MCF 10A (cell line): ENCODE measurements at regions of chr5 and their contacts with region 1.

Region 1: GRCh38 chr5:16916262-16916865 is 19.7 kb downstream of the MYO10 start:
- DNase-seq: peak; percentile 93
- H3K4me3 Mint-ChIP-seq: peak overlapping the region; percentile 54
- H3K27ac Mint-ChIP-seq: peak overlapping the region; percentile 81
- H3K4me1 Mint-ChIP-seq: peaks cover 43% of the 10 kb centered on the region
- H3K27me3 Mint-ChIP-seq: no peaks in the 10 kb centered on the region
- CTCF ChIP-seq: no peak

Region 2: DNA sequence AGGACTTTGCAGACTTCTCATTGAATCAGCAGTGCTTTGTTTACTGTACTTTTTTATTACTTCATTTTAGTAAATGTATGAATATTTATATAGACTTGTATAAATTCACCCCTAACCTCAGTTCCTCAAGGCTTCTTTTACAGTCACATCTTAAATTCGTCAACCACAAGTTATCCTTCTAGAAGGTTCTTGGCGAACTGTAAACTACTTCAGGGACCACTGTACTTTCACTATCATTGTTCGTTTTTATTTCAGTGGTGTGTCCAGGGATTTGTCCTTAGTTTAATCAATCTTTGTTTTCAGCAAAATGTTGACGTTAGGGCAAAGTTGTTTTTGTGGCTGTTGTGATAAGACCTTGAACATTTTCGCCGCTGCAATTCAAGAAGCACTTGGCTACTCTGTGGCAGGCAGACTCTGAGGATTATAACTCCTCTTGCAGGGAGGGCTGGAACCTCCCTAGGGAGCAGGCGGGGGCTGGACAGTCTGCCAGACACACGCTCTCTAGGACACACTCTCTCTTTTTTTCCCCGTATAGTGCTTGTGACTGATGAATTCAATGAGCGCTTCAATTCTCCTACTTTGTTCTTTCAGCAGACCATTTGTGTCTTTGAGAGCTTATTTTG is 1163.6 kb before region 1 on chr5:
- CTCF ChIA-PET with region 1: no interaction called
- POLR2A ChIA-PET with region 1: no interaction called
- intact Hi-C with region 1: no loop called
- DNase-seq: no peak
- H3K4me3 Mint-ChIP-seq: no peak overlapping the region
- H3K27ac Mint-ChIP-seq: no peak overlapping the region
- H3K4me1 Mint-ChIP-seq: no peaks in the 10 kb centered on the region
- H3K27me3 Mint-ChIP-seq: peaks cover 11% of the 10 kb centered on the region
- CTCF ChIP-seq: no peak

Region 3: DNA sequence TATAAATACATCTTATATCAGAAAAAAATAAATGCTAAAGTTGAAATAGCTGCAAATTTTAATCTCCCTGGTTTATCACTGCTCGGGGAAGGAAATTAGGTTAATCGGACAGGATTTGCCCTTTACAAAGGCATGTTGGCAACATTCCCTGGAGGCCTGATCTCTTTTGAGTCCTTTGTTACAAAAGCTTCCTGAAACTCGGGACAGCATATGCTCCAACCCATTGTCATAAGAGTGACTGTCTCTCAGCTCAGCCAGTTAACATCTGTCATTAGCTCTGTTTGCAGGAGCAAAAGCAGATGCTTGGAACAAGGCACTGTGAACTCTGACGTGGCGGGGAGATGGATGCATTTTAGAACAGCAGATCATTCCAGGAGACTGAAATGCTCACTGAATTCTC is 60.9 kb before region 1 on chr5:
- CTCF ChIA-PET with region 1: no interaction called
- POLR2A ChIA-PET with region 1: interaction called, 5 read pairs
- intact Hi-C with region 1: loop called (anchors 2 kb)
- DNase-seq: no peak
- H3K4me3 Mint-ChIP-seq: no peak overlapping the region
- H3K27ac Mint-ChIP-seq: no peak overlapping the region
- H3K4me1 Mint-ChIP-seq: peaks cover 10% of the 10 kb centered on the region
- H3K27me3 Mint-ChIP-seq: no peaks in the 10 kb centered on the region
- CTCF ChIP-seq: no peak

Region 4: GRCh38 chr5:16871746-16872339 is 44.5 kb before region 1 on chr5:
- CTCF ChIA-PET with region 1: interaction called, 3 read pairs
- POLR2A ChIA-PET with region 1: interaction called, 12 read pairs
- intact Hi-C with region 1: no loop called
- DNase-seq: peak; percentile 39
- H3K4me3 Mint-ChIP-seq: no peak overlapping the region
- H3K27ac Mint-ChIP-seq: no peak overlapping the region
- H3K4me1 Mint-ChIP-seq: peaks cover 18% of the 10 kb centered on the region
- H3K27me3 Mint-ChIP-seq: no peaks in the 10 kb centered on the region
- CTCF ChIP-seq: no peak

Region 5: GRCh38 chr5:16902846-16903245 is 13.5 kb before region 1 on chr5:
- CTCF ChIA-PET with region 1: interaction called, 7 read pairs
- POLR2A ChIA-PET with region 1: interaction called, 32 read pairs
- intact Hi-C with region 1: no loop called
- DNase-seq: peak; percentile 64
- H3K4me3 Mint-ChIP-seq: no peak overlapping the region
- H3K27ac Mint-ChIP-seq: peak overlapping the region; percentile 70
- H3K4me1 Mint-ChIP-seq: peaks cover 29% of the 10 kb centered on the region
- H3K27me3 Mint-ChIP-seq: no peaks in the 10 kb centered on the region
- CTCF ChIP-seq: no peak

Region 6: GRCh38 chr5:16992006-16992405 is 75.6 kb after region 1 on chr5:
- CTCF ChIA-PET with region 1: no interaction called
- POLR2A ChIA-PET with region 1: no interaction called
- intact Hi-C with region 1: no loop called
- DNase-seq: peak; percentile 20
- H3K4me3 Mint-ChIP-seq: no peak overlapping the region
- H3K27ac Mint-ChIP-seq: peak overlapping the region; percentile 57
- H3K4me1 Mint-ChIP-seq: peaks cover 15% of the 10 kb centered on the region
- H3K27me3 Mint-ChIP-seq: no peaks in the 10 kb centered on the region
- CTCF ChIP-seq: no peak

Region 7: GRCh38 chr5:18067615-18068014 is 1151.3 kb after region 1 on chr5:
- CTCF ChIA-PET with region 1: no interaction called
- POLR2A ChIA-PET with region 1: no interaction called
- intact Hi-C with region 1: no loop called
- DNase-seq: no peak
- H3K4me3 Mint-ChIP-seq: no peak overlapping the region
- H3K27ac Mint-ChIP-seq: no peak overlapping the region
- H3K4me1 Mint-ChIP-seq: no peaks in the 10 kb centered on the region
- H3K27me3 Mint-ChIP-seq: no peaks in the 10 kb centered on the region
- CTCF ChIP-seq: no peak